Left cardiac atrium (tissue), 4 donors: ENCODE measurements at regions of chr2 and their contacts with region 1.

Region 1: GRCh38 chr2:9998916-9999654 is 44.3 kb upstream of the KLF11 start:
- DNase-seq: no peak
- ATAC-seq: peak; percentile 48 to 69

Region 2: DNA sequence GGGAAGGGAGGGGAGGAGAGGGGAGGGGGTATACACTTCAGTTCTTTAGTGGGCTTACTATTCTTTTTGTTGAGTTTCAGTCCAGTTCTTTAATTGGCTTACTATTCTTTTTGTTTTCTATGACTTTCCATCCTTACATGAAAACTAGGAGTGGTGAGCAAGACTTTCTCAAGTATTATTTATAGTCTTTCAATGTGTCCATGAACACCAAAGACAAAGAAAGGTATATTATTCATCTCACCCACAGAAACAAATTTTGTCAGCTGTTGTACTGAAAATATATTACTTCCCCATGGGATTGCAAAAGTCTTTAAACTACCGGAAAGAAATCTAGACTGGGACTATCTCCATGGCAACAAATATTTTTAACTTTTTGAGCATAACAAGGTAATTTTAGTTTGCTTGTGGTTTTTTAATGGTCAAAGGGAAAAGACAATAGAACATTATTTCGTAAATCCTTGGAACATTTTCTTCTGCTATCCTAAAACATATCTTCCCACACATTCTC is 461.0 kb before region 1 on chr2:
- intact Hi-C with region 1: no loop called
- DNase-seq: no peak
- ATAC-seq: peak; percentile 34 to 75

Region 3: GRCh38 chr2:10036095-10036884 is 37.2 kb after region 1 on chr2:
- intact Hi-C with region 1: loop called in 1 of 2 experiments (anchors 5 kb)
- DNase-seq: peak; percentile 79
- ATAC-seq: peak; percentile 78 to 83